ENCODE measurements at regions of chr5 and their contacts with region 1.

Region 1: GRCh38 chr5:59039296-59040023 is 456.6 kb downstream of the RAB3C start:
- DNase-seq: peak; percentile 85
- ATAC-seq: peak; percentile 57

Region 2: GRCh38 chr5:59133682-59134261 is 94.3 kb after region 1 on chr5:
- intact Hi-C with region 1: loop called (anchors 5 kb)
- DNase-seq: no peak
- ATAC-seq: peak; percentile 73

Measured in sciatic nerve (tissue), 2 donors.